Activated CD4-positive, alpha-beta memory T cell treated with anti-CD3 and anti-CD28 coated beads for 36 hours (primary cell): ENCODE measurements at regions of chr17 and their contacts with region 1.

Region 1: DNA sequence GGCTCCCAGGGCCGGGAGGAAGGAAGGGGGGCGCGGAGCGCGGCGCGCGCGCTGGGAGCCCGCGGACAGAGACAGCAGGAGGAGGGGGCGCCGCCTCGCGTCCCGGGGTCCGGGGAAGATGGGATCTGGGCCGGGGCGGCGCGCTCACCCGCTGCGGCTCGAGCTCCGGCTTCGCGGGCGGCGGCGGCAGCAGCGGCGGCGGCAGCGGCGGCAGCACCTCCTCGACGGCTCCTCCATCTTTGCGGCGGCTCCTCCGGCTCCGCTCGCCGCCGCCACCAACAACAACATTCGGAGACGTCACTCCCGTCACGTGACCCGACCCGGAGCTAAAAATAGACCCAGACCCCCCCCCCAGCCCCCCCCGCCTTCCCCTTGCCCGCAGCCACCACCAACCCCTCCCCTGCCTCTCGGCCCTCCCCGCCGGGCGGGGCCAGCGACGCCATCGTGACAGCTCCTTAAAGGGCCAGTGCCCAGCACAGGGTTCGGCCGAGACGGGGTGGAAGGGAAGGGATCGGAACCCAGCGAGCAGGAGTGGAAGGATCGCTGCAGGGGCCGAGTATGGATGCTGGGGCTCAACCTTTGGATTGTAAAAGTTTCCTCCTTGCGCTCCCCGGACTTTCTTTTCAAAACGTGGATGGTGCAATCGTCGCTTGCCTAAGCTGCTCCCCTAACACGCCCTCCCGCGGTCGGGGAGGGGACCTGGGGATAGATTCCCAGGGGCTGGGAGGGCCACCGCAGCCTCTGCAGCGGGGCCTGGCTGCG is at the start of gene HDAC5:
- DNase-seq: peak; percentile 97
- H3K4me3 Mint-ChIP-seq: peak within 1 kb of the TSS; percentile 86
- H3K27ac Mint-ChIP-seq: peak within 1 kb of the TSS; percentile 92
- H3K4me1 Mint-ChIP-seq: peaks cover 25% of the 10 kb centered on the region
- H3K27me3 Mint-ChIP-seq: no peaks in the 10 kb centered on the region
- total RNA-seq, gene HDAC5: 18.0 to 19.0 TPM

Region 2: DNA sequence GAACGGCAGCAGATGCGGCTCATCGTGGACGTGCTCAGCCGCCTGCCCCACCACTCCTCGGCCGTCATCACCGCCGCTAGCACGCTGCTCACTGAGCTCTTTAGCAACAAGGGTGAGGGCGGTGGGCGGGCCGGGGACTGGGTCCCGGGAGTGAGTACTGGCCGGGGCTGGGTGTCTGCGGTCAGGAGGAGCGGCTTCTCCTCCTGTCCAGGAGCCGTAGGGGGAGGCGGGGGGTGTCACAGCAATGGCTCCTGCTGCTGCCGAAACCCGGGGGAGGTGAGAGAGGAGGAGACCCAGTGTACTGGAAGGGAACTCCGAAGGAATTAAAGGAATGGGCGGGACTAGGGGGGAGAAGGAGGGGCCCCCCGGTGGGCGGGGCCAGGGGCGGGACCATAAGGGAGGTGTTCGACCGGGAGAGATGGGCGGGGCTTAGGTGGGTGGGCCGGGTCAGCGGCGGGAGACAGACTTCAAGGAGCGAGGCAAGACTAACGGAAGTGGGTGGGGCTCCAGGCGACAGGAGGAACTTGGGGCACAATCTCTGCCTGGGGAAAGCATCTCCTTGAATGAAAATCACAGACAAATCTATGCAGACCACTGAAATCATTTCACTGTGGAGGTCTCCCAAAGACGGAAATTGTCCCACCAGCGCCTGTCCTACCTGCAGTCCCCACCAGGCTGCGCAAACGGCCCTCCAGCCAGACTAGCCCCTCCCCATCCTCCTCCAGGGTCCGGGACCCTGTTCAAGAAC is 116.8 kb before region 1 on chr17:
- CTCF ChIA-PET with region 1: no interaction called
- POLR2A ChIA-PET with region 1: no interaction called
- intact Hi-C with region 1: loop called (anchors 5 kb)
- DNase-seq: peak; percentile 100
- H3K4me3 Mint-ChIP-seq: peak overlapping the region; percentile 86
- H3K27ac Mint-ChIP-seq: peak overlapping the region; percentile 3
- H3K4me1 Mint-ChIP-seq: peaks cover 23% of the 10 kb centered on the region
- H3K27me3 Mint-ChIP-seq: peaks cover 6% of the 10 kb centered on the region

Region 3: GRCh38 chr17:44141717-44142285 is 18.3 kb after region 1 on chr17 and contains the start of gene HROB:
- CTCF ChIA-PET with region 1: interaction called, 10 read pairs
- POLR2A ChIA-PET with region 1: interaction called, 11 read pairs
- intact Hi-C with region 1: loop called (anchors 1 kb)
- DNase-seq: peak; percentile 99
- H3K4me3 Mint-ChIP-seq: peak within 1 kb of the TSS; percentile 87
- H3K27ac Mint-ChIP-seq: peak within 1 kb of the TSS; percentile 89
- H3K4me1 Mint-ChIP-seq: peaks cover 24% of the 10 kb centered on the region
- H3K27me3 Mint-ChIP-seq: peaks cover 4% of the 10 kb centered on the region
- total RNA-seq, gene HROB: 17.9 to 19.8 TPM